ENCODE measurements at regions of chr13 and their contacts with region 1.

Region 1: DNA sequence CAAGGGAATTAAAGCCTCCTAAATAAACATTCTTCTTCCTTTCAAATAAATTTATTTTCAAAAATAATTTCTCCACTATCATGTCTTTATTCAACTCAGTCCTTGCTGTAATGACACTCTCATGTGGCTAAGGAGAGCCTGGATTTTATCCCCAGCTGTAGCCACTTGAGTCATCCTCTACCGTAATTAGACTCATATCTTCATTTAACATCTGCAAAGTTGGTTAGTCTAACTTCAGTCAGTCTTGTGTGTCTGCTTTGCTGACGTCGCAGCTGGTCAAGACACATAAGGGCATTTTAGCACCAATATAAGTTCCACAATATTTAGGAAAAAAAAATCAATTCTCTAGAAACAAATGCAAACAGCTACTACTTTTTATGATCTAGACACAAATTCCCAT is 776.4 kb upstream of the ATXN8OS start:
- DNase-seq: no peak
- ATAC-seq: no peak
- H3K4me3 ChIP-seq: no peak overlapping the region
- H3K27ac ChIP-seq: no peak overlapping the region
- H3K4me1 ChIP-seq: no peaks in the 10 kb centered on the region
- H3K27me3 ChIP-seq: no peaks in the 10 kb centered on the region
- CTCF ChIP-seq: no peak
- EP300 ChIP-seq: no peak
- POLR2A ChIP-seq: no peak
- RAD21 ChIP-seq: no peak

Region 2: GRCh38 chr13:68872338-68872737 is 458.9 kb before region 1 on chr13:
- CTCF ChIA-PET with region 1: no interaction called
- POLR2A ChIA-PET with region 1: no interaction called
- in situ Hi-C with region 1: no loop called
- intact Hi-C with region 1: loop called (anchors 5 kb)
- DNase-seq: no peak
- ATAC-seq: no peak
- H3K4me3 ChIP-seq: no peak overlapping the region
- H3K27ac ChIP-seq: no peak overlapping the region
- H3K4me1 ChIP-seq: no peaks in the 10 kb centered on the region
- H3K27me3 ChIP-seq: no peaks in the 10 kb centered on the region
- CTCF ChIP-seq: no peak
- EP300 ChIP-seq: no peak
- POLR2A ChIP-seq: no peak
- RAD21 ChIP-seq: no peak

Region 3: DNA sequence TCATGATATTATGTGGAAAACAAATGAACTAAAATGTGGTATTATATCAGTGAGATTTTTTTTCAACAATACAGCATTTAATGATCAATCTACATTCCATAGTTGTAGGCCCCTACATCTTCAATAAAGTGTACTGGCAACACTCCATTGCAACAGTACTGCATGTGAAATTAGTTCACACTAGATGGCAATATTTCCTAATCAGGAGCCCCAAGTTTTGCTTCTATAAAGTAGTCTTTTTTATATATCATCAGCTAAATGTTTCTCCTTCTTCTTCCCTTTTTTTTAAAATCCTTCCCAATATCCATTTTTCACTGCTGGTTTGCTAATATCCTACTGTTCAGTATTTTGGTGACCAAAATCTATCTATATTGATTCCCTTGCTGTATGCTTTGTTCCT is 248.1 kb after region 1 on chr13:
- CTCF ChIA-PET with region 1: no interaction called
- POLR2A ChIA-PET with region 1: no interaction called
- in situ Hi-C with region 1: no loop called
- intact Hi-C with region 1: no loop called
- DNase-seq: no peak
- ATAC-seq: no peak
- H3K4me3 ChIP-seq: no peak overlapping the region
- H3K27ac ChIP-seq: no peak overlapping the region
- H3K4me1 ChIP-seq: no peaks in the 10 kb centered on the region
- H3K27me3 ChIP-seq: no peaks in the 10 kb centered on the region; a peak in 1 of 5 replicates
- CTCF ChIP-seq: no peak
- EP300 ChIP-seq: no peak
- POLR2A ChIP-seq: no peak
- RAD21 ChIP-seq: no peak

Measured in HepG2 (cell line).